ENCODE measurements at regions of chr18 and their contacts with region 1.

Region 1: DNA sequence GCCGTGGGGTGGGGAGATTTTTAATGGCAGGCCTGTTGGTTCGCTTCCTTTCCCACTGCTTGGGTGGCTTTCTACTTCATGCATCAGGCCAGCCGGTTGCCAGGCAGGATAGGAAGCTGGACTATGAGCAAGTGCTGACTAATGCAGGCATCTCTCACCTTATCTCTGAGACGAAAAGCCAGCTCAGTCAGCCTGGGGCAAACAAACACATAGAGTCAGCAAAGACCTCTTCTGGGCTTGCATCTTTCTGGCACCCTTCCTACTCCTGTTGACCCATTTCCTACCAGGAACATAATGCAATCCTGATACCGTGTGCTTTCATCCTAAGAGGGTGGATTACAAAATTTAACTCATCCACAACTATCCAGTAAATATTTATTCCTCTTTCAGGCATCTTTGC is 416.6 kb upstream of the MEX3C start:
- DNase-seq: peak; percentile 97
- H3K4me3 ChIP-seq: no peak overlapping the region
- H3K27ac ChIP-seq: peak overlapping the region; percentile 79
- H3K4me1 ChIP-seq: peaks cover 49% of the 10 kb centered on the region
- H3K27me3 ChIP-seq: no peaks in the 10 kb centered on the region
- CTCF ChIP-seq: no peak

Region 2: GRCh38 chr18:51135795-51136194 is 478.2 kb before region 1 on chr18:
- CTCF ChIA-PET with region 1: no interaction called
- dilution Hi-C with region 1: no loop called
- in situ Hi-C with region 1: no loop called
- intact Hi-C with region 1: loop called (anchors 10 kb)
- DNase-seq: no peak
- H3K4me3 ChIP-seq: no peak overlapping the region
- H3K27ac ChIP-seq: peak overlapping the region; percentile 96
- H3K4me1 ChIP-seq: peaks cover 47% of the 10 kb centered on the region
- H3K27me3 ChIP-seq: no peaks in the 10 kb centered on the region
- CTCF ChIP-seq: peak; percentile 12 to 20

Region 3: DNA sequence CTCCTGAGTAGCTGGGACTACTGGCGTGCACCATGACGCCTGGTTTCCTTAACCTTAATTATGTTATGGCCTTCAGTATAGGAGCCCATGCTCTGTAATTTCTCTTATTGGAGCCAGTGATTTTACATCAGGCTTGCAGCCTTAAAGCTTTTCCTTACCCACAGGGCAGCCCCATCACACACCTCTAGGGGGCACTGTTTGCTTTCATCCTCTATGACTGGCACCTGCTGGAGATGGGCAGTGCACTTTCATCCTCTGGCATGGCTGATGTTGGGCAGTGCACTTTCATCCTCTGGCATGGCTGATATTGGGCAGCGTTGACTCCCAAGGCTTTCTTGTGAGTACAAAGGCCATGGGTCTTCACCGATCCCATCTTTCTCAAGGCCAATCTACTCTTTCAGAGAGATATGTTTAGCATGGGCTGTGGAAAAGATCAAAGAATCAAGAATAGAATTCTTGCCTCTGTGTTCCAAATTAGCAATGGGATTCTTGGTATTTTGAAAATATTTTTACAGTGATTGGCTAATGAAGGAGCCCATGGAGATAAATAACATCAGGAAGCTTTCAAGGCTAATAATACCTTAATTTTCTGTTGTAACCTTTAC is 335.9 kb before region 1 on chr18:
- CTCF ChIA-PET with region 1: interaction called, 5 read pairs
- dilution Hi-C with region 1: no loop called
- in situ Hi-C with region 1: no loop called
- intact Hi-C with region 1: loop called (anchors 2 kb)
- DNase-seq: peak; percentile 57
- H3K4me3 ChIP-seq: no peak overlapping the region
- H3K27ac ChIP-seq: no peak overlapping the region
- H3K4me1 ChIP-seq: no peaks in the 10 kb centered on the region
- H3K27me3 ChIP-seq: no peaks in the 10 kb centered on the region
- CTCF ChIP-seq: peak; percentile 96 to 98

Region 4: DNA sequence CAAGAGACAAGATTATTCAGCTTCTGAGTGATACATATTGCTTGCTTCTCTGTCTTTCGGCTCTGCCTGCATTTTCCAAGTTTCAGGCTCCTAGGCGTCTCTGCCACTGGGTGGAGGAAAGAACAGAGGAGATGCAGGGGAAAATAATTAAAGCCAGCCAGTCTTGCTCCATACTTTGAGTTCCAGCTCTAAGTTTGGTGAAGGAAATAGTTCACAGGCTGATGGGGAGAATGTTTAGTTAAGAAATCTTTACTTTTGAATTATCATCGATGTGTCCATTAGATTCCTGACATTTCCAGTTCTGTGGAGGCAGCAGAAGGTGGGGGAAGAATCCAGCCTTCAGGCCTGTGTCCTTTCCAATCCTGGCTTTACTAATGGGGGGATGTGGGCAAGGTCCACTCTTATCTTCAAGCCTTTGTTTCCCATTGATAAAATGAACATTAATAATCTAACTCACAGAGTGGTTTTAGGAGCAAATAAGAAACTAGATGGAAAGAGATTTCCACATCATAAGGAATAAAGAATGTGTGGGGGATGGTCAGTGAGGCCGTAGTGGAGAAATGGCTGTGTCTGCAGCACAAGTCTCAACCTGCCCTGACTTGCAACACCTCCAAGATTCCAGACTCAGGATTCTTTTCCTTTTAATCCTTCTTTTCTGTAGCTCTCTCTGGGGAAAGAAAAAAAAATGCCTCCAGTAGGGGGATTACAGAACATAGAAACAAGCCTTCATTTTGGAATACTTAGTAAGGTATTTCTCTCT is 292.5 kb before region 1 on chr18:
- CTCF ChIA-PET with region 1: no interaction called
- dilution Hi-C with region 1: no loop called
- in situ Hi-C with region 1: no loop called
- intact Hi-C with region 1: loop called (anchors 10 kb)
- DNase-seq: peak; percentile 85
- H3K4me3 ChIP-seq: no peak overlapping the region
- H3K27ac ChIP-seq: peak overlapping the region; percentile 43
- H3K4me1 ChIP-seq: peaks cover 22% of the 10 kb centered on the region
- H3K27me3 ChIP-seq: no peaks in the 10 kb centered on the region
- CTCF ChIP-seq: peak; percentile 22 to 24

Region 5: GRCh38 chr18:51522821-51523220 is 91.2 kb before region 1 on chr18:
- CTCF ChIA-PET with region 1: no interaction called
- dilution Hi-C with region 1: no loop called
- in situ Hi-C with region 1: no loop called
- intact Hi-C with region 1: loop called (anchors 10 kb)
- DNase-seq: peak; percentile 87
- H3K4me3 ChIP-seq: no peak overlapping the region
- H3K27ac ChIP-seq: peak overlapping the region; percentile 76
- H3K4me1 ChIP-seq: peaks cover 80% of the 10 kb centered on the region
- H3K27me3 ChIP-seq: no peaks in the 10 kb centered on the region
- CTCF ChIP-seq: no peak

Region 6: DNA sequence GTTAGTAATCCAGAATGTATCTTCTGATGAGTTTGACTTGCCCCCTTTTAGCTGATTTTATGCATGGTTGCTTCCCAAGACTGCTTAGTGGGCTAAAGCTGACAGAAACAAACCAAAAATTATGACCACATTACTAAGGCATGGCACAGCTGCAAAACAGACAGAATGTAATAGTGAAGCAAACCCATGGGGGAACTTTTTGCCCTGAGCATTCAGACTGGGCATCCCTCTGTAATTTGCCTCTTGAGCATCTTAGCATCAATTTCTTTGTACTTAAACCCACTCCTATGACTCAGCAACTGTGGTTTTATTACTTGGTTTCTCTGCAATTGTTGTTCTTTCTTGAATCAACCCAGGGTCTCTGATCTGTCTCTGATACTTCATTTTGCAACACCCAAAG is 238.6 kb after region 1 on chr18:
- CTCF ChIA-PET with region 1: no interaction called
- dilution Hi-C with region 1: no loop called
- in situ Hi-C with region 1: no loop called
- intact Hi-C with region 1: no loop called
- DNase-seq: no peak
- H3K4me3 ChIP-seq: no peak overlapping the region
- H3K27ac ChIP-seq: no peak overlapping the region
- H3K4me1 ChIP-seq: no peaks in the 10 kb centered on the region
- H3K27me3 ChIP-seq: no peaks in the 10 kb centered on the region
- CTCF ChIP-seq: no peak

Region 7: DNA sequence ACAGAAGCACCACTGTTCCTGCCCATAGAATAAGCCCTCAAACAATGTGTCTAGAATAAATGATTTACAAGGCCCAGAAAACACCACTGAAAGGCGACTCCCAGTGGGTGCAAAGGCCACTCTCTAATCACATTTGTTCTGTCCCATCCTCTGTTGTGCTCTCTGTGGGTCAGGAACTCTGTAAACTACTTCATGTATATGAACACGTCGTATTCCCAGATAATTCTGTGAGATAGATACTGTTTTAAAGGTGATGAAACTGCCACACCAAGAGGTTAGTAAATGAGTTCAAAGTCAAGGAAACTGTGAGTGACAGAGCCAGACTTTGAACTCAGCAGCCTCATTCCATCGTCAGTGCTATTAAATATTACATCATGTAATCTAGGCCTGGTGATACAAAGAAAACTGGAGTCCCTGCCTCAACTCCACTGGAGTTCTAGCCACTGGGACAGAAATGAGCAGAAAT is 456.3 kb after region 1 on chr18:
- CTCF ChIA-PET with region 1: no interaction called
- dilution Hi-C with region 1: no loop called
- in situ Hi-C with region 1: no loop called
- intact Hi-C with region 1: no loop called
- DNase-seq: no peak
- H3K4me3 ChIP-seq: no peak overlapping the region
- H3K27ac ChIP-seq: no peak overlapping the region
- H3K4me1 ChIP-seq: no peaks in the 10 kb centered on the region
- H3K27me3 ChIP-seq: no peaks in the 10 kb centered on the region
- CTCF ChIP-seq: no peak

Region 8: GRCh38 chr18:52237551-52237950 is 623.5 kb after region 1 on chr18:
- CTCF ChIA-PET with region 1: no interaction called
- dilution Hi-C with region 1: no loop called
- in situ Hi-C with region 1: no loop called
- intact Hi-C with region 1: loop called (anchors 5 kb)
- DNase-seq: peak; percentile 98
- H3K4me3 ChIP-seq: no peak overlapping the region
- H3K27ac ChIP-seq: peak overlapping the region; percentile 94
- H3K4me1 ChIP-seq: peaks cover 31% of the 10 kb centered on the region
- H3K27me3 ChIP-seq: no peaks in the 10 kb centered on the region
- CTCF ChIP-seq: no peak

Measured in mammary epithelial cell (primary cell).